ENCODE measurements at regions of chr1 and their contacts with region 1.

Region 1: GRCh38 chr1:109298666-109299557 is 7.9 kb downstream of the MYBPHL start:
- DNase-seq: peak; percentile 48 to 63
- ATAC-seq: peak; percentile 27 to 59 (median 40)
- H3K4me3 ChIP-seq: no peak overlapping the region
- H3K27ac ChIP-seq: peak overlapping the region; percentile 61
- H3K4me1 ChIP-seq: peaks cover 13% of the 10 kb centered on the region
- H3K27me3 ChIP-seq: no peaks in the 10 kb centered on the region
- CTCF ChIP-seq: no peak

Region 2: DNA sequence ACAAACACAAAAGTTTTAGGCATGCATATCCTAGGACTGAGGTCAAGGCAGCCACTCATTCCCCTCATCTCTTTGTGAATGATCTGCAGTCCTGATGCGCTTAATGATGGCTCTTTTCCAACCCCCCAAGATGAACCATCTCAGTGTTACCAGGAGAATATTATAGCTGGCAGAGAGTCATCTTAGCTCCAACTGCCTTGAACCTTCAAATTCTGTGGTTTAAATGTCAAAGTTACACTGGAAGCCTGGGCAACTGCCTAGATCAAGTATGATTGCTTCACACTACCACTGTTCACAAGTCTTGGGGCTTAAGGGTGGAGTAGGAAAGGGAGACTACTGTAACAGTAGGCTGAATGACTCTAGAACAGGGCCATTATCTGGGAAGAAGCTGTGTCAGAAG is 15.9 kb after region 1 on chr1:
- intact Hi-C with region 1: loop called in 1 of 2 experiments (anchors 2 kb)
- DNase-seq: no peak
- ATAC-seq: no peak
- H3K4me3 ChIP-seq: no peak overlapping the region
- H3K27ac ChIP-seq: no peak overlapping the region
- H3K4me1 ChIP-seq: no peaks in the 10 kb centered on the region
- H3K27me3 ChIP-seq: no peaks in the 10 kb centered on the region
- CTCF ChIP-seq: no peak

Region 3: GRCh38 chr1:109357616-109358015 is 58.7 kb after region 1 on chr1:
- intact Hi-C with region 1: loop called in 1 of 2 experiments (anchors 10 kb)
- DNase-seq: no peak
- ATAC-seq: no peak
- H3K4me3 ChIP-seq: no peak overlapping the region
- H3K27ac ChIP-seq: no peak overlapping the region
- H3K4me1 ChIP-seq: peaks cover 17% of the 10 kb centered on the region
- H3K27me3 ChIP-seq: no peaks in the 10 kb centered on the region
- CTCF ChIP-seq: no peak

Measured in psoas muscle (tissue), 8 donors.